Esophagus muscularis mucosa (tissue), 4 donors: ENCODE measurements at regions of chr3 and their contacts with region 1.

Region 1: DNA sequence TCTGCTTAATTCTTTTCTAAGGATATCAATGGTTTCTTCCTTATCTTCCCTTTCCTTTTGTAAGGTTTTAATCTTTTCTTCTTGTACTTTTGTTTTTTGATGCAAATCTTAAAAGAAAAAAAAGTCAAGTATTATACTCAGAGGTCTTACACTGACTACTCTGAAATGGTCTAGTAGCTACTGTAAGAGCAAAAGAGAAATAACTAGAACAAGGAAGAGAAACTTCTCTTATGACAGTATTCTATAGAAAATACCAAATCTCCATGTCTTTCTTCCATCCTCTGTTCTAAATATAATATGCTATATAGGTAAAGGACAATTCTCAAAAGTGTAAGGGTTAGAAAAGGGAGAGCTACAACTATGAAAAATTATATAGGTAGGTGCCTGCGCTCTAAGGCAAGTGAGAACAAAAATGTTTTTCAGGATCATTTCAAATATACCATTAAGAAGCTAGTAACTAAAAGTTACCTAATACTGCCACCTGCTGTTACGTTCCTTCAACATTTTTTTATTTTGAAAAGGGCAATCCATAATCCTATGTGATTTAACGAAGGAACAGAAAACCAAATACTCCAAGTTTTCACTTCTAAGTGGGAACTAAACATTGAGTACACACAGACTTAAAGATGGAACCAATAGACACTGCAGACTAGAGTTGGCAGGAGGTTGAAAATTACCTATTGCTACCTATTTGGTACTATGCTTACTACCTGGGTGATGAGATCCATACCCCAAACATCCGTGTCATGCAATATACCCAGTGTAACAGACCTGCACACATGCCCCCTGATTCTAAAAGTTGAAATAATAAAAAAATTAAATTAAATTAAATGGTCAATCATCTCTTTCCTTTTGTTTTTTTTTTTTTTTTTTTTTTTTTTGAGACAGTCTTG is 36.7 kb downstream of the CIP2A start:
- DNase-seq: no peak
- H3K4me3 ChIP-seq: peak overlapping the region in 1 of 4 donors; percentile 7
- H3K27ac ChIP-seq: peak overlapping the region in 1 of 4 donors; percentile 5
- H3K4me1 ChIP-seq: peaks cover 3 to 36% (median 22%) of the 10 kb centered on the region in 4 donors
- H3K27me3 ChIP-seq: no peaks in the 10 kb centered on the region
- CTCF ChIP-seq: peak; percentile 57 to 62 (median 58)
- EP300 ChIP-seq: no peak
- POLR2A ChIP-seq: no peak

Region 2: GRCh38 chr3:108489771-108490170 is 62.7 kb before region 1 on chr3:
- intact Hi-C with region 1: loop called (anchors 1 kb)
- DNase-seq: no peak
- H3K4me3 ChIP-seq: no peak overlapping the region
- H3K27ac ChIP-seq: no peak overlapping the region
- H3K4me1 ChIP-seq: peaks cover 3 to 23% (median 20%) of the 10 kb centered on the region in 4 donors
- H3K27me3 ChIP-seq: no peaks in the 10 kb centered on the region
- CTCF ChIP-seq: peak; percentile 77 to 84 (median 83)
- EP300 ChIP-seq: no peak
- POLR2A ChIP-seq: no peak